ENCODE measurements at regions of chr10 and their contacts with region 1.

Region 1: GRCh38 chr10:87715552-87716347 is 56.1 kb downstream of the PAPSS2 start:
- DNase-seq: no peak
- ATAC-seq: peak in 3 of 4 donors; percentile 12 to 38 (median 25)
- H3K4me3 ChIP-seq: no peak overlapping the region
- H3K27ac ChIP-seq: peak overlapping the region; percentile 11 to 76 (median 52)
- H3K4me1 ChIP-seq: peaks cover 0 to 35% (median 15%) of the 10 kb centered on the region in 12 donors
- H3K27me3 ChIP-seq: no peaks in the 10 kb centered on the region
- CTCF ChIP-seq: no peak
- POLR2A ChIP-seq: no peak

Region 2: DNA sequence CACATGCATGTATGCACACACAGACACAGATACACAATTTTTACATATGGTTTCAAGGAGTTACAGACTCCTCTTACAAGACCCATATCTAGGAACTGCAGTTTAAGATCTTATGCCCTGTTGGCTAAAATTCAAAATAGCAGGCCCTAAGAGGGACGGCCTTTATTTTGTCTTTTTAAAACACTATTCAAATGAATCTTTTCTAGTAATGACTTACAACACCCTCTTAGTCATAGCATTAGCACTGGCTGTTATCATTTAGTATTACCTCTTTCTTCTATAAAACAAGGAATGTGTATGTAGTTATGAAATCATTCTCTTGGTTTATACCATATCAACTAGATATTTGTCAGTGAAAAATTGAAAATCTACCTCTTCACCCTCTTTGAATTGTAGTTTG is 40.8 kb before region 1 on chr10:
- intact Hi-C with region 1: loop called in 1 of 10 experiments (anchors 5 kb)
- DNase-seq: no peak
- ATAC-seq: no peak
- H3K4me3 ChIP-seq: no peak overlapping the region
- H3K27ac ChIP-seq: no peak overlapping the region
- H3K4me1 ChIP-seq: peaks cover 0 to 26% (median 0%) of the 10 kb centered on the region in 12 donors
- H3K27me3 ChIP-seq: no peaks in the 10 kb centered on the region
- CTCF ChIP-seq: no peak
- POLR2A ChIP-seq: no peak

Region 3: DNA sequence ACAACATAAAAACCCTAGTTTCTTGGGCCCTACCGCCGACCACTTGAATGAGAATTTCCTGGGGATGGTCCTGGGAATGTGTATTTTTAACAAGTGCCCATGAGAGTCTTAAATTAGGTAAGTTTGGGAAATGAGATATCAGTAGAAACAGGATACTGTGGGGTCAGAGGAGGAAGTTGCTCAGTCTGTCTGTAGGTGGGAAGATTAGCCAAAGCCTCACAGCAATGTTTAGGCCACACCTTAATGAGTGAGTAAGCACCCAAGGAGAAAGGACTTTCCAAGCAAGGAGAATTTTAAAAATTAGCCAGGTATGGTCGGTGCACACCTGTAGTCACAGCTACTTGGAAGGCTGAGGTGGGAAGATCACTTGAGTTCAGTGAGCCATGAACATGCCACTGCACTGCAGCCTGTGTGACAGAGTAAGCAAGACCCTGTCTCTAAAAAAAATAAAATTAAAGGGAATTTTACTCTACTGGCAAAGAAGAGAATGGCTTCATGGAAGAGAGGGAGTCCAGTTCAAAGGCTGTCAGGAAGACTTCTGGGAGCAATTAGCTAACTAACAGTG is 24.2 kb before region 1 on chr10:
- intact Hi-C with region 1: no loop called
- DNase-seq: no peak
- ATAC-seq: peak in 1 of 4 donors; percentile 54
- H3K4me3 ChIP-seq: no peak overlapping the region
- H3K27ac ChIP-seq: no peak overlapping the region
- H3K4me1 ChIP-seq: peaks cover 0 to 2% (median 0%) of the 10 kb centered on the region in 12 donors
- H3K27me3 ChIP-seq: no peaks in the 10 kb centered on the region
- CTCF ChIP-seq: no peak
- POLR2A ChIP-seq: no peak